BJ (cell line): ENCODE measurements at regions of chr15 and their contacts with region 1.

Region 1: GRCh38 chr15:78872972-78873792 is 492 bp downstream of the MORF4L1 start:
- DNase-seq: peak; percentile 74
- H3K4me3 ChIP-seq: peak overlapping the region; percentile 100
- H3K27me3 ChIP-seq: no peaks in the 10 kb centered on the region
- CTCF ChIP-seq: peak; percentile 63

Region 2: DNA sequence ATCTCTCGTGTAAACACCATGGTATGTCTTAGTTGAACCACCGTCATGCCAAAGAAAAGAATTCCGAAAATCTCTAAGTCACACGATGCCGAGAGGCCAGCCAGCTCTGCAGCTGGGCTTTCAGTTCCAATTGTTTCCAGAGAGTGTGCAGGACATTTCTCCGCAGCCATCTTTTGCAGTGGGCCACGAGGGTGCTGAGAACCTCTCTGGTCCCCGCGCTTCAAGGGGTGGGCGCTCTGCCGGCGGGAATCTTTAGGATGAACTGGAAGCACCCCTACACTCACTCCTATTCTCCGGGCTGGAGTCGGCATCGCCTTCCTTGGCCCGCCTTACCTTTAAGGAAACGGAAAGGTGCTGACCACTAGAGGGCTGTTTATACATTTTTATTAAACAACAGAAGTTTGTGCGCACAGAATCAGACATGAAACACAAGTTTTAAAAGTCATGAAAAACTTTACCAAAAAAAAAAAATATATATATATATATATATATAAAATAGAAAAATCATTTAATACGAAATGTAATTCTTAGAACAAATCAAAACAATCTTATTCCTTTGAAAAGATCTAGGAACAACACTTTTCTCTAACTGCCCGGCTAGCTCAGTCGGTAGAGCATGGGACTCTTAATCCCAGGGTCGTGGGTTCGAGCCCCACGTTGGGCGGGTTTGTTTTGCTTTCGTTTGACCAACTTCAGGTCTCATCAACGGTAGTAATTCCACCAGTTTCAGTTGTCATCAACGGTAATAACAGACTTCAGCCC is 13.0 kb before region 1 on chr15:
- CTCF ChIA-PET with region 1: interaction called, 20 read pairs
- POLR2A ChIA-PET with region 1: interaction called, 16 read pairs
- DNase-seq: no peak
- H3K4me3 ChIP-seq: peak overlapping the region; percentile 50
- H3K27me3 ChIP-seq: no peaks in the 10 kb centered on the region
- CTCF ChIP-seq: peak; percentile 64